MCF 10A (cell line): ENCODE measurements at regions of chr4 and their contacts with region 1.

Region 1: GRCh38 chr4:83639849-83640493 is 104.1 kb downstream of the GPAT3 start:
- DNase-seq: peak; percentile 83
- H3K4me3 Mint-ChIP-seq: no peak overlapping the region
- H3K27ac Mint-ChIP-seq: no peak overlapping the region
- H3K4me1 Mint-ChIP-seq: peaks cover 5% of the 10 kb centered on the region
- H3K27me3 Mint-ChIP-seq: peaks cover 39% of the 10 kb centered on the region
- CTCF ChIP-seq: peak; percentile 85

Region 2: GRCh38 chr4:83362492-83363329 is 277.3 kb before region 1 on chr4:
- CTCF ChIA-PET with region 1: interaction called, 4 read pairs
- POLR2A ChIA-PET with region 1: no interaction called
- intact Hi-C with region 1: loop called (anchors 1 kb)
- DNase-seq: peak; percentile 51
- H3K4me3 Mint-ChIP-seq: no peak overlapping the region
- H3K27ac Mint-ChIP-seq: no peak overlapping the region
- H3K4me1 Mint-ChIP-seq: no peaks in the 10 kb centered on the region
- H3K27me3 Mint-ChIP-seq: no peaks in the 10 kb centered on the region
- CTCF ChIP-seq: peak; percentile 35

Region 3: GRCh38 chr4:83503974-83504373 is 136.0 kb before region 1 on chr4:
- CTCF ChIA-PET with region 1: interaction called, 38 read pairs
- POLR2A ChIA-PET with region 1: interaction called, 4 read pairs
- intact Hi-C with region 1: loop called (anchors 1 kb)
- DNase-seq: no peak
- H3K4me3 Mint-ChIP-seq: no peak overlapping the region
- H3K27ac Mint-ChIP-seq: no peak overlapping the region
- H3K4me1 Mint-ChIP-seq: no peaks in the 10 kb centered on the region
- H3K27me3 Mint-ChIP-seq: no peaks in the 10 kb centered on the region
- CTCF ChIP-seq: no peak

Region 4: GRCh38 chr4:83658806-83659495 is 19.0 kb after region 1 on chr4:
- CTCF ChIA-PET with region 1: interaction called, 35 read pairs
- POLR2A ChIA-PET with region 1: no interaction called
- intact Hi-C with region 1: no loop called
- DNase-seq: no peak
- H3K4me3 Mint-ChIP-seq: no peak overlapping the region
- H3K27ac Mint-ChIP-seq: no peak overlapping the region
- H3K4me1 Mint-ChIP-seq: no peaks in the 10 kb centered on the region
- H3K27me3 Mint-ChIP-seq: peaks cover 33% of the 10 kb centered on the region
- CTCF ChIP-seq: no peak

Region 5: DNA sequence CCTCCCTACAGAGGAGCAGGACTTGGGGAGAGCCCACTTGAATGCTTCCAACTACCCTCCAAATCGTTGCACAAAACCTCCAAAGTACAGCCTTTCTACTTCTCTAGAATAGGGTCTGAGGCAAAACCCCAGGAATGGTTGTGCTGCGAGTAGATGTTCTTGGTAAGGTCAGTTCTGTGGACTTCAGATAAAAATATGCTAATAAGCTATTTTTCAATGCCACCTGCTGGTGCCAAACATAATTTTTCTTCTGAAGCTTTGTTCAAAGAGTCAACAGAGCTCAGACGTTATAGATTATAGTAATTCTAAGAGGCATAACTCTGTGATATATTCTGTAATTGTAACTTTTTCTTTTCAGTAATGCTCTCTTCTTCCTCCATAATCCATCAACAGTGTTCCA is 321.6 kb after region 1 on chr4:
- CTCF ChIA-PET with region 1: interaction called, 66 read pairs
- POLR2A ChIA-PET with region 1: no interaction called
- intact Hi-C with region 1: loop called (anchors 1 kb)
- DNase-seq: peak; percentile 39
- H3K4me3 Mint-ChIP-seq: no peak overlapping the region
- H3K27ac Mint-ChIP-seq: no peak overlapping the region
- H3K4me1 Mint-ChIP-seq: no peaks in the 10 kb centered on the region
- H3K27me3 Mint-ChIP-seq: no peaks in the 10 kb centered on the region
- CTCF ChIP-seq: peak; percentile 41

Region 6: GRCh38 chr4:84503495-84504437 is 863.8 kb after region 1 on chr4:
- CTCF ChIA-PET with region 1: interaction called, 41 read pairs
- POLR2A ChIA-PET with region 1: no interaction called
- intact Hi-C with region 1: loop called (anchors 1 kb)
- DNase-seq: peak; percentile 77
- H3K4me3 Mint-ChIP-seq: no peak overlapping the region
- H3K27ac Mint-ChIP-seq: no peak overlapping the region
- H3K4me1 Mint-ChIP-seq: peaks cover 6% of the 10 kb centered on the region
- H3K27me3 Mint-ChIP-seq: peaks cover 49% of the 10 kb centered on the region
- CTCF ChIP-seq: peak; percentile 67